Activated CD8-positive, alpha-beta T cell treated with anti-CD3 and anti-CD28 coated beads, Interleukin-2, amount 10 ng/mL, durations not matched to agents 7 days and 5 days (primary cell): ENCODE measurements at regions of chr3 and their contacts with region 1.

Region 1: DNA sequence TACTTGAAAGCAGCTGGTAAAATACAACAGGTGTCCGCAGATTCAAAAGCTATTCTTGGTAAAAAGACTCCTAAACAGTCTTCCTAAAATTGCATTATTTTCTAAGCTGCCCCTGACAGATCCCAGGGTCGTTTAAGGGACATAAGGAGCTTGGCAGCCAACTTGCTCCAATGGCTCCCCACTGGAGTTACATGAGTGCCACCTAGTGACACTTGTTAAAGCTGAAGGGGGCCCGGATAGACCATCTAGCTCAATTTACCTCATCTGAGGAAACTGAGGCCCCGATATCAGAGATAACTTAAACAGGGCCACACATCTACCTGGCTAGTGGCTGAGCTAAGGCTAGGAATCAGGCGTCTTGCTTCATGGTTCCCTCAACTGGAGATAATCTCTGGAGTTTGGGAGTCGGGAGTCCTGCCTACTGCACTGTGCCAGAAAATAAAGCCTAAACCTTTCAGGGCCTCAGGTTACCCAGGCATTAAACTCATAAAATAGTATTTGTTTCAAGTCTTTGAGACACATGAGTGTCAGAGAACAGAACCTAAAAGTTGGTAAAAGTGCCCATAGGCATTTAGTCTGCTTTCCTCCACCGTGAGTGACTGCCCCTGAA is 6.5 kb upstream of the TBC1D23 start:
- DNase-seq: peak; percentile 74
- ATAC-seq: peak; percentile 92
- H3K4me3 Mint-ChIP-seq: no peak overlapping the region
- H3K27ac Mint-ChIP-seq: peak overlapping the region; percentile 16
- H3K4me1 Mint-ChIP-seq: peaks cover 24% of the 10 kb centered on the region
- H3K27me3 Mint-ChIP-seq: no peaks in the 10 kb centered on the region

Region 2: DNA sequence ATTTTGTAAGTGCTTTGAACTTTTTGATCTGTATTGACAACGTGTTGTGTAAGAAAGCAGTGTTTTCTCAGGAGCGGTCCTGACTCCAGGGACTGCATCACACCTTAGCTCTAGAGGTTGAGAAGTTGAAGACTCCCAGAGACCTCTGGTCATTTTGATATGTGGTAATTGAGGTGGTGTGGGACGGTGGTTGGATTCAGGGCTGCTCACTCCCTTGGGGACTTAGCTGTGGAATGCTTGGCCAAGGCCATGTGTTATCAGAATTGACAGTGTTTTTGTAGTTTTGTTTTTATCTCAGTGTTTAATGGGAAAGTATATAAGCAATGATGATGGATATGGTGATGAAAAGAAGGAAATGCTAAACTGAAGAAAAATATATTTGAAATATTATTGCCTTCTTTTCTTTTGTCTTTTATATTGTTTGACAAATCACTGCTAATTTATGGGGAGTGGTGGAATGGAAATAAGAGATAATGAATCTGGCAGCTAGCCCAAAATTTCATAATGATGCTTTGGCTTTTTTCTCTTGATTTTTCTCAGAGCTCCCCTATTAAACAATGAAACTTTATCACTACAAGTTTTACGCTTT is 420.6 kb before region 1 on chr3:
- CTCF ChIA-PET with region 1: interaction called, 78 read pairs
- POLR2A ChIA-PET with region 1: no interaction called
- DNase-seq: no peak
- ATAC-seq: no peak
- H3K4me3 Mint-ChIP-seq: no peak overlapping the region
- H3K27ac Mint-ChIP-seq: no peak overlapping the region
- H3K4me1 Mint-ChIP-seq: peaks cover 3% of the 10 kb centered on the region
- H3K27me3 Mint-ChIP-seq: no peaks in the 10 kb centered on the region

Region 3: GRCh38 chr3:99842826-99843589 is 411.3 kb before region 1 on chr3:
- CTCF ChIA-PET with region 1: interaction called, 72 read pairs
- POLR2A ChIA-PET with region 1: no interaction called
- DNase-seq: no peak
- ATAC-seq: peak; percentile 63
- H3K4me3 Mint-ChIP-seq: no peak overlapping the region
- H3K27ac Mint-ChIP-seq: no peak overlapping the region
- H3K4me1 Mint-ChIP-seq: peaks cover 18% of the 10 kb centered on the region
- H3K27me3 Mint-ChIP-seq: no peaks in the 10 kb centered on the region

Region 4: DNA sequence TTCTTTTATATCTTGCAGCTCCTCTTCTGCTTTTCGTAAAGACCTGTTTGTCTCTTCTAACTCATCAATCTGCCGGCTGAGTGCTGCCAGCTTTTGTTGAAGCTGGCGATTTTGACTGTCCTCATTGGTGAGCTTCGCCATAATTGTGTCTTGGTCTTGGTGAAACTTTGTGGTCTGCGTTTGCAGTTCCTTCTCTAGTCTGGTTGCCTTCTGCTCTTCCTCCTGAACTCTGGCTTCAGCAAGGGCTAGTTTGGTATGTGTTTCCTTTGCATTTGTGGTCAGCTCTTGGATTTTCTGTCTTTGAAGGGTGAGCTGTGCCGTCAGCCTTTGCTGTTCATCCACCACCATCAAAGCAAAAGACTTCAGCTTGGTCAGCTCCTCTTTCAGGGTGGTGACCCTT is 403.7 kb before region 1 on chr3:
- CTCF ChIA-PET with region 1: interaction called, 20 read pairs
- POLR2A ChIA-PET with region 1: no interaction called
- DNase-seq: no peak
- ATAC-seq: no peak
- H3K4me3 Mint-ChIP-seq: no peak overlapping the region
- H3K27ac Mint-ChIP-seq: no peak overlapping the region
- H3K4me1 Mint-ChIP-seq: peaks cover 12% of the 10 kb centered on the region
- H3K27me3 Mint-ChIP-seq: no peaks in the 10 kb centered on the region

Region 5: DNA sequence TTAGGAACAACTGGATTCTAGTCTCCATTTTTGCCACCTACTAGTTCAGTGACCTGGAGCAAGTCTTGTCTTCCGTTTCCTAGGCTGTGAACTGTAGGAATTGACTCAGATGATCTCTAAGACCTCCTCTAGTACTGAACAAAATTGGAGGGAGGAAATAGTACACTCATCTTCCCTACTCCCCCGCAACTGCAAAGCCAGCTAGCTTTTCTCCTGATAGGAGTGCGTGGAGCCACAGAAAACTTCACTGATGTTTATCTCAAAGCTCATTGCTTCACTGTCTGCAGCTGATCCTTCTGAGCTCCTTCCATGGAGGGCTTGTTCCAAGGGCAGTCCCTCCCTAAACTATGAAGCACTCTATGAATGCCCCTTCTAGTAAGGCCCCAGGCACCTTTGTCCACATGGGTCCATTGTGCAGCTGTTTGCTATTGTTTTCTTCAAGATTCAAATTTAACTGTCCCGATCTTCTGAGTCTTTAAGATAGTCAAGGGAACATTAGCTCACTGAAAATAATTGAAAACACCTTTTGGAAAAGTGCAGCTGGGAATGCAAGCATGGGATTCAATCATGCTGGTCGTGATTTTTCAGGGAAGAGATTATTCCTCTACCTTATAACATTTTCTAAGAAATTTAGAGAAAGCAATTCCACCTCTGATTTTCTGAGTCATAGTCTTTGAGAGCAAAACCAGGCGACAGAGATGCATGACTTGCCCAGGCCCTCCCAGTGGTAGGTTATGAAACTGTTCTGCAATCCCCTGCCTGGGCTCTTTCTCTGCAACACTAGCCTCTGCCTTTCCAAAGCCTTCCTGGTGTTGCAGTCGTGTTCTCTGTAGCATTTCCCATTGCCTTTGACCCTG is 164.2 kb before region 1 on chr3:
- CTCF ChIA-PET with region 1: interaction called, 11 read pairs
- POLR2A ChIA-PET with region 1: no interaction called
- DNase-seq: peak; percentile 56
- ATAC-seq: peak; percentile 84
- H3K4me3 Mint-ChIP-seq: no peak overlapping the region
- H3K27ac Mint-ChIP-seq: peak overlapping the region; percentile 43
- H3K4me1 Mint-ChIP-seq: peaks cover 61% of the 10 kb centered on the region
- H3K27me3 Mint-ChIP-seq: peaks cover 3% of the 10 kb centered on the region

Region 6: DNA sequence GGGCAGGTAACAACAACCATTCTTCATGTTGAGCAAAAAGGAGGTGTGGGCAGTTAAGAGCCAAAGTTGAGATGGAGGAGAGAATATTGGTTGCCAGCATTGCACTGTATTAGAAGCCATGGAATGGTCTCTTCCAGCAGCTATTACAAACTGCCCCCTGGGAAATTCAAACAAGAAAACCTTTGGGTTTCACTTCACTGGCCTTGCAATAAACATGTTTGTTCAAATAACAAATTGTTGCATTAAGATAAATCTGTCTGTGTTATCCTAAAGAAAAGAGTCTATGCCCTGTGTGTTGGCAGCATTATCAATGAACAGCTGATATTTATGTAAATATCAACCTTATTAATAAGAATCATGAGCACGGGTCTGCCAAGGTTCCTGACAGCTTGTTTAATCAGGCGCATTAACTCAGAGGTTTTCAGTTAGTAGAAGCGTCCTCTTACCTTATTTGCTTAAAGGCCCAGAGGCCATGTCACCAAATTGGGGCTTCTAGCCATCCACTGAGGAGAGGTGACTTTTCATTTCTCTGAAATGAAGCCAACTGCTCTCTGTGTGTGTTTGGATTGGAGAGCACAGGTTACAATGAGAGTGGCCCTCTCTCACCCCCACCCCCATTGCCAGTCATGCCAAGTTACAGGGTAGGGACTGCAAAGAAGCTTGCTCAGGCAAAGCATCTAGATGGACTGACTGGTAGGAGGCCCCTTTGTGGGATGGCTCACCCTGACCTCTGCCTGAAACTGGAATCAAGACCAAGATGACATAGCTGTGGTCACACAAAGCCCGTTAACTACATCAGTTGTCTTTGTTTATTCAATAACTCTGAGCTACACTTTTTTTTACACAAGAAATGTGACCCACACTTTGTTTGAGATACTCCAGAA is 150.5 kb before region 1 on chr3:
- CTCF ChIA-PET with region 1: interaction called, 16 read pairs
- POLR2A ChIA-PET with region 1: no interaction called
- DNase-seq: no peak
- ATAC-seq: no peak
- H3K4me3 Mint-ChIP-seq: no peak overlapping the region
- H3K27ac Mint-ChIP-seq: peak overlapping the region; percentile 31
- H3K4me1 Mint-ChIP-seq: peaks cover 59% of the 10 kb centered on the region
- H3K27me3 Mint-ChIP-seq: no peaks in the 10 kb centered on the region

Region 7: DNA sequence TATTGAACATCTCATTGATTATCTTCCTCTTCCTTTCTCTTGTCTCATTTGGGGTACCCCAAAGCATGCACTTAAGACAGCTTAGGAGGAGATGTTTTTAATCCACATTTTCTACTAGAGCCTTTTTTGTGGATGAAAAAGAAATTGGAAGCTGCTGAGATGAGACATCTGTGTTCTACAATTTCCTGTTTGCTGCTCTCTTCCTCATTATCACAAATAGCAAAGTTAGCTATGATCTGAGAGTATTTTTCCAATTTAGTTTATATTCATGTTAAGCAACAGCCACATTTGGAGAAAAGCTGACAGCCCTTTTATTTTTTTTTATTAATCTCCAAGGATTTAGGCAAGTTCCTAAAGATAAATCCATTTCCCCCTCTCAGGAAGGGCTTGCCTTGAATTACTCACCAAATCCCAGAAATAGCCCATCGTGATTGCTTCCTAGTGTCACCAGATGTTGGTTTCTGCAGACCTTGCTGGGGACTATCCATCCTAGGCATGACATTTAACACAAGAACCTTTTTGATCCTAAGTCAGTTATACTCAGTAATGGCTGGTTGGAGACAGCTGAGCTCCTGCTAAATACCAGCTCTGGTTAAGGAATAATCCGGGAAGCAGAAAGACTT is 69.2 kb before region 1 on chr3:
- CTCF ChIA-PET with region 1: no interaction called
- POLR2A ChIA-PET with region 1: no interaction called
- DNase-seq: no peak
- ATAC-seq: no peak
- H3K4me3 Mint-ChIP-seq: no peak overlapping the region
- H3K27ac Mint-ChIP-seq: no peak overlapping the region
- H3K4me1 Mint-ChIP-seq: peaks cover 4% of the 10 kb centered on the region
- H3K27me3 Mint-ChIP-seq: no peaks in the 10 kb centered on the region

Region 8: DNA sequence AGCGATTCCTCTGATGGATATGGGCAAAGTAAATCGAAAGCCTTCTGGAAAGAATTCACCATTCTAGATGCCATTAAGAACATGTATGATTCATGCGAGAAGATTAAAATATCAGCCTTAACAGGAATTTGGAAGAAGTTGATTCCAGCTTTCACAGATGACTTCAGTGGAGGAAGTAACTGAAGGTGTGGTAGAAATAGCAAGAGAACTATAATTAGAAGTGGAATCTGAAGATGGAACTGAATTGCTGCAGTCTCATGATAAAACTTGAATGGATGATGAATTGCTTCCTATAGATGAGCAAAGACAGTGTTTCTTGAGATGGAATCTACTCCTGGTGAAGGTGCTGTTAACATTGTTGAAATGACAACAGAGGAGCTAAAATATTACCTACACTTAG is 23.6 kb before region 1 on chr3:
- CTCF ChIA-PET with region 1: interaction called, 12 read pairs
- POLR2A ChIA-PET with region 1: no interaction called
- DNase-seq: no peak
- ATAC-seq: no peak
- H3K4me3 Mint-ChIP-seq: no peak overlapping the region
- H3K27ac Mint-ChIP-seq: no peak overlapping the region
- H3K4me1 Mint-ChIP-seq: peaks cover 4% of the 10 kb centered on the region
- H3K27me3 Mint-ChIP-seq: peaks cover 16% of the 10 kb centered on the region

Region 9: DNA sequence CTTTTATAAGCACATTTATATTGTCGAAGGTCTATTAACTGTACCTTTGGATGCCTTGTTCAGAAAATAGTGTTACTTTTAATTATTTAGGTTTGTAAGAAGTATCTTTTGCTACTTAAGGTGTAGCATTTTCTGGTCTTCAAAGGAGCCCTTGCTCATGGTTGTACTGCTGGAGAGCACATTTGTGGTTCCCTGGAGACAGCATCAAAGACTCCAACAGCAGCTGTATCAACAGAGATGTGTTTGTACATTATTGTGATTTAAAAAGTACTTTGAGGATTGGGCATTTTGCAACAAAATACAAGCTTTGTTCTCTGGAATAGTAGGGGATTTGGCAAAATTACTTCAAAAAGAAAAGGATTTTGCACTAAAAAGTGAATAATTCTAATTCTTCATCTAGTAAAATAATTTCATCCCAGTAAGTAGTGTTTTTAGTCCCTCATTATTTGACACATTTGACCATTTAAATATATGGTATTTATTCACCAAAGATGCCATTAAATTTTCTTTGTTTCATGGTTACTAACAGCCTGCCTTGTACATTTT is 23.1 kb after region 1 on chr3:
- CTCF ChIA-PET with region 1: no interaction called
- POLR2A ChIA-PET with region 1: no interaction called
- DNase-seq: no peak
- ATAC-seq: no peak
- H3K4me3 Mint-ChIP-seq: no peak overlapping the region
- H3K27ac Mint-ChIP-seq: no peak overlapping the region
- H3K4me1 Mint-ChIP-seq: no peaks in the 10 kb centered on the region
- H3K27me3 Mint-ChIP-seq: no peaks in the 10 kb centered on the region